Natural killer cell (primary cell): ENCODE measurements at regions of chr15 and their contacts with region 1.

Region 1: DNA sequence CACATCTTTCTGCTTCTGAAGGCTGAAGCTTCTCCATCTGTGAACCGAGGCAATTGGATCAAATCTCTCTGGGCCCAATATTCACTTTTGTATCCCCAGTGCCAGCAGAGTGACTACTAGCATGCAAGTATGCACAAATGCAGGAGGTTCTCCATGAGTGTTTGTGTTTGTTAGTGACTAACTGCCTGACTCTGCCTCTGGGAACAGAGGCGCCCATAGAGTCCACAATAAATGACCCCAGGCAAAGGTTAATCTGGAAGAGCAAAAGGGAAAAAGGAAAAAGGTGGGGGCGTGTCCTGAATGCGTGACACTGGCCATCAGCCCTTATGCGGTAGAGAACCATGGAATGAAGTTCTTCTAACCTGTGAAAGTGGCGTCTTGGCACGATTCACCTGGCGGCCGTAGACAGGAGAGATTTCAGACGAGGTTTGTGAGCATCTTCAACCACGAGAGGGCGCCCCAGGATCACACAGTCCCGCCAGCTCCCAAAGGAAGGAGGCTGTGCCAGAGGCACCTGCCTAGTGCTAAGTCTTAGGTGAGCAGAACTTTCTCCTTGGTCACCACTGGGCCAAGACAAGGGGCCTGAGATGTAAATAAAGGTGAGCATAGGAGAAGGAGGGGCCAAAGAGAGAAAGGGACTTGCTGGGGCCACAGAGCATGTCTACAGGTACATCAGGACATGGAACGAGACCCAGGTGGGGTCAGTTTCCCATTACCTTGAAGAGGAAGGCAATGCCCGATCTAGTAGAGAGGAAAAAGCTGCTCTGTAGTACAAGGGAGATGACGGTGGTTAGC is 44.2 kb downstream of the RBPMS2 start:
- DNase-seq: peak; percentile 82 to 92
- ATAC-seq: peak; percentile 75 to 84 (median 75)
- H3K4me3 ChIP-seq: no peak overlapping the region
- H3K4me3 Mint-ChIP-seq: no peak overlapping the region
- H3K27ac ChIP-seq: no peak overlapping the region
- H3K27ac Mint-ChIP-seq: peak overlapping the region in 1 of 2 donors; percentile 74
- H3K4me1 ChIP-seq: peaks cover 9% of the 10 kb centered on the region
- H3K4me1 Mint-ChIP-seq: peaks cover 8 to 15% of the 10 kb centered on the region in 2 donors
- H3K27me3 ChIP-seq: no peaks in the 10 kb centered on the region
- H3K27me3 Mint-ChIP-seq: peaks cover 0 to 4% of the 10 kb centered on the region in 2 donors
- CTCF ChIP-seq: peak; percentile 93

Region 2: DNA sequence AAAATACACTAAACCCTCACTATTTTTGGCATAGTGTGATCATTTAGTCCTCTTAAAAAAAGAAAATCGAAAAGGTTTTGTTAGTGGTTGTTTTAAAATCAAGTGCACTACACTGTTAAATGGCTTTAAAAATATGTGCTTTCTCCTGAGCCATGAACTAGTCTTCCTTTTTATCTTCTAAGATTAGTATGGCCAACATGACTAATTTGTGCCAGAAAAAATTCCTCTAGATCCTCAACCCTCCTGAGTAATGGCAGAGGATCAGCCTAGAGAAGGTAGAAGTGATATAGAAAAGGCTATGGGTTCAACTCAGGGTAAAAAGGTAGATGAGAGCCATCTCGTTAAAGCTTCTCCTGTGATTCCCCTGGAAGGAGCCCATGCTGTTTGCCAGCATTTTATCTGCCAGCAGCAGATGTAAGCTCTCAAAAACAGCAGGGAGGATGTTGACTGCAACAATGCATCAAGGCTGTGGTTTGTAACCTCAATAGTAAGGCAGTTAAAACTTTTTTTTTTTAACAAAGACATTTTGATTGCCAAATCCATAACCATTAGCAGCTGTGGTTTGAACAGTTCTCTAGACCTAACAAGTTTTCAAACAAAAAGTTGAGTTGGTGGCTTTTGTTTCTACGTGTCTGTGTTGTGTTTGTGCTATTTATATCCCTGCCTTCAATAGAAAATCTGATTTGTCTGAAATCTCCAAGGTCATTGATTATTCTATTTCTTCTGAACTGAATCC is 301.0 kb before region 1 on chr15:
- intact Hi-C with region 1: loop called (anchors 2 kb)
- DNase-seq: peak; percentile 19 to 84
- ATAC-seq: peak; percentile 82 to 94 (median 87)
- H3K4me3 ChIP-seq: no peak overlapping the region
- H3K4me3 Mint-ChIP-seq: peak overlapping the region; percentile 72
- H3K27ac ChIP-seq: peak overlapping the region; percentile 74
- H3K27ac Mint-ChIP-seq: peak overlapping the region; percentile 66 to 87
- H3K4me1 ChIP-seq: peaks cover 11% of the 10 kb centered on the region
- H3K4me1 Mint-ChIP-seq: peaks cover 17 to 21% of the 10 kb centered on the region in 2 donors
- H3K27me3 ChIP-seq: no peaks in the 10 kb centered on the region
- H3K27me3 Mint-ChIP-seq: no peaks in the 10 kb centered on the region
- CTCF ChIP-seq: no peak

Region 3: GRCh38 chr15:64552281-64552948 is 178.8 kb before region 1 on chr15:
- intact Hi-C with region 1: no loop called
- DNase-seq: no peak
- ATAC-seq: no peak
- H3K4me3 ChIP-seq: no peak overlapping the region
- H3K4me3 Mint-ChIP-seq: no peak overlapping the region
- H3K27ac ChIP-seq: no peak overlapping the region
- H3K27ac Mint-ChIP-seq: no peak overlapping the region
- H3K4me1 ChIP-seq: no peaks in the 10 kb centered on the region
- H3K4me1 Mint-ChIP-seq: peaks cover 17 to 22% of the 10 kb centered on the region in 2 donors
- H3K27me3 ChIP-seq: no peaks in the 10 kb centered on the region
- H3K27me3 Mint-ChIP-seq: no peaks in the 10 kb centered on the region
- CTCF ChIP-seq: no peak

Region 4: DNA sequence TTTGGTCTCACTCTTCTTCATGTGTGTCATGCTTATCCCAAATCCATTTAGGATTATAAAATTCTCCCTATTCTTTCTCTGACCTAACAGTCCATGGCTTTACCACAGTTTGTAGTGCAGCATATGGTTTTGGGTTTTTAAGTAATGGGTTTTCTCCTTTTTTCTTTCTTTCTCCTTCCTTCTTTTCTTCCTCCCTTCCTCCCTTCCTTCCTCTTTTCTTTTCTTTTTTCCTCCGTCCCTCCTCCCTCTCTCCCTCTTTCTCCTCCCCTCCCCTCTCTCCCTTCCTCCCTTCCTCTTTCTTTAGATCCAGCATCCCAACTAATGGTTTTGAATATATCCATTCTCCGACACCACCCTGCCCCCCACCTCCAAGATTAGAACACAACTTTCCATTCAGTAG is 74.7 kb before region 1 on chr15:
- intact Hi-C with region 1: no loop called
- DNase-seq: no peak
- ATAC-seq: no peak
- H3K4me3 ChIP-seq: no peak overlapping the region
- H3K4me3 Mint-ChIP-seq: no peak overlapping the region
- H3K27ac ChIP-seq: no peak overlapping the region
- H3K27ac Mint-ChIP-seq: no peak overlapping the region
- H3K4me1 ChIP-seq: peaks cover 12% of the 10 kb centered on the region
- H3K4me1 Mint-ChIP-seq: peaks cover 3 to 4% of the 10 kb centered on the region in 2 donors
- H3K27me3 ChIP-seq: no peaks in the 10 kb centered on the region
- H3K27me3 Mint-ChIP-seq: no peaks in the 10 kb centered on the region
- CTCF ChIP-seq: no peak

Region 5: GRCh38 chr15:64667736-64668161 is 63.5 kb before region 1 on chr15:
- intact Hi-C with region 1: no loop called
- DNase-seq: no peak
- ATAC-seq: no peak
- H3K4me3 ChIP-seq: no peak overlapping the region
- H3K4me3 Mint-ChIP-seq: no peak overlapping the region
- H3K27ac ChIP-seq: no peak overlapping the region
- H3K27ac Mint-ChIP-seq: peak overlapping the region; percentile 19 to 38
- H3K4me1 ChIP-seq: no peaks in the 10 kb centered on the region
- H3K4me1 Mint-ChIP-seq: peaks cover 0 to 5% of the 10 kb centered on the region in 2 donors
- H3K27me3 ChIP-seq: no peaks in the 10 kb centered on the region
- H3K27me3 Mint-ChIP-seq: no peaks in the 10 kb centered on the region
- CTCF ChIP-seq: no peak

Region 6: GRCh38 chr15:64686216-64686631 is 45.0 kb before region 1 on chr15:
- intact Hi-C with region 1: loop called (anchors 1 kb)
- DNase-seq: peak in 1 of 2 donors; percentile 74
- ATAC-seq: peak in 2 of 3 donors; percentile 37 to 44
- H3K4me3 ChIP-seq: no peak overlapping the region
- H3K4me3 Mint-ChIP-seq: no peak overlapping the region
- H3K27ac ChIP-seq: no peak overlapping the region
- H3K27ac Mint-ChIP-seq: peak overlapping the region; percentile 10 to 43
- H3K4me1 ChIP-seq: peaks cover 2% of the 10 kb centered on the region
- H3K4me1 Mint-ChIP-seq: peaks cover 3% of the 10 kb centered on the region in 2 donors
- H3K27me3 ChIP-seq: no peaks in the 10 kb centered on the region
- H3K27me3 Mint-ChIP-seq: no peaks in the 10 kb centered on the region
- CTCF ChIP-seq: peak; percentile 65

Region 7: GRCh38 chr15:64754663-64755426 is 23.6 kb after region 1 on chr15:
- intact Hi-C with region 1: no loop called
- DNase-seq: no peak
- ATAC-seq: no peak
- H3K4me3 ChIP-seq: no peak overlapping the region
- H3K4me3 Mint-ChIP-seq: no peak overlapping the region
- H3K27ac ChIP-seq: no peak overlapping the region
- H3K27ac Mint-ChIP-seq: peak overlapping the region in 1 of 2 donors; percentile 72
- H3K4me1 ChIP-seq: no peaks in the 10 kb centered on the region
- H3K4me1 Mint-ChIP-seq: peaks cover 6 to 29% of the 10 kb centered on the region in 2 donors
- H3K27me3 ChIP-seq: no peaks in the 10 kb centered on the region
- H3K27me3 Mint-ChIP-seq: no peaks in the 10 kb centered on the region
- CTCF ChIP-seq: no peak

Region 8: GRCh38 chr15:64809649-64810496 is 78.7 kb after region 1 on chr15:
- intact Hi-C with region 1: loop called (anchors 1 kb)
- DNase-seq: peak; percentile 65 to 83
- ATAC-seq: peak; percentile 76 to 86 (median 85)
- H3K4me3 ChIP-seq: no peak overlapping the region
- H3K4me3 Mint-ChIP-seq: no peak overlapping the region
- H3K27ac ChIP-seq: no peak overlapping the region
- H3K27ac Mint-ChIP-seq: peak overlapping the region in 1 of 2 donors; percentile 29
- H3K4me1 ChIP-seq: no peaks in the 10 kb centered on the region
- H3K4me1 Mint-ChIP-seq: peaks cover 0 to 7% of the 10 kb centered on the region in 2 donors
- H3K27me3 ChIP-seq: no peaks in the 10 kb centered on the region
- H3K27me3 Mint-ChIP-seq: no peaks in the 10 kb centered on the region
- CTCF ChIP-seq: peak; percentile 90

Region 9: DNA sequence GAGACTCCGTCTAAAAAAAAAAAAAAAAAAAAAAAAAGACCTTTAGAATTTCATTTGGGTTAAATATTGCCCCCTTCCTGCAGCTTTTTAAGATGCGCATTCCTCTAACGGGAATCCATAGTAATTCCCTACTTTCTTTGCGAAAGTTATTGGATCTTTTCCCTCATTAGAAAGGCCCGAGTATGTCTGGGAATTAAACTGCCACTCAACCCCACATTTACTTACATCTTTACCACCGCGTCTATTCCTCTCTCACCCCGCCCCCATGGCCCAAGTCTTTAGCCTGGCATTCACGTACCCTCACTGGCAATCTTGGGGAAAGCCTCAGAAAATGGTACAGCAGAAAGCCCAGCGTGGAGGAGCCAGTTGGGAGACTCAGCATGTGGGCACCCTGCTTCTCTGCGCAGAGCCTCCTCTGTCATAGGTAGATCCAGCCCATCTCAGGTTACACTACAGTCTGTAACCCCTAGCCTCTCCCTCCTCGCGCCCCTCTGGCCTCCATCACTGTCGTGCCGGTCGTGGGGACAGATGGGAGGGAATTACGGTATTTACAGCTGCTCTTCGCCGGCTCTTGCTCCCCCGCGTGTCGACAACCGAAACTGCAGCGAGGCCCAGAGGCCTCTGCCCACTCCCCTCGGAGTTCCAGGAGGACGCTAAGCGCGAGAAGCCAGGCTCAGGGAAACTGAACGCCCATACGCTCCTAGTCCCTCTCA is 174.1 kb after region 1 on chr15:
- intact Hi-C with region 1: loop called (anchors 1 kb)
- DNase-seq: peak; percentile 78 to 87
- ATAC-seq: peak; percentile 82 to 89 (median 84)
- H3K4me3 ChIP-seq: peak overlapping the region; percentile 6
- H3K4me3 Mint-ChIP-seq: peak overlapping the region; percentile 86
- H3K27ac ChIP-seq: no peak overlapping the region
- H3K27ac Mint-ChIP-seq: peak overlapping the region; percentile 72 to 81
- H3K4me1 ChIP-seq: peaks cover 24% of the 10 kb centered on the region
- H3K4me1 Mint-ChIP-seq: peaks cover 32 to 42% of the 10 kb centered on the region in 2 donors
- H3K27me3 ChIP-seq: no peaks in the 10 kb centered on the region
- H3K27me3 Mint-ChIP-seq: peaks cover 0 to 2% of the 10 kb centered on the region in 2 donors
- CTCF ChIP-seq: peak; percentile 91